ENCODE measurements at regions of chr3 and their contacts with region 1.

Region 1: GRCh38 chr3:137963473-137963872 is 46.5 kb upstream of the CLDN18 start:
- DNase-seq: no peak
- ATAC-seq: no peak
- H3K4me3 ChIP-seq: no peak overlapping the region
- H3K4me3 Mint-ChIP-seq: no peak overlapping the region
- H3K27ac ChIP-seq: no peak overlapping the region
- H3K27ac Mint-ChIP-seq: no peak overlapping the region
- H3K4me1 ChIP-seq: no peaks in the 10 kb centered on the region
- H3K4me1 Mint-ChIP-seq: no peaks in the 10 kb centered on the region
- H3K27me3 ChIP-seq: peaks cover 0 to 2% of the 10 kb centered on the region in 2 experiments
- H3K27me3 Mint-ChIP-seq: peaks cover 2 to 9% of the 10 kb centered on the region in 2 donors

Region 2: GRCh38 chr3:136869282-136869681 is 1094.2 kb before region 1 on chr3:
- CTCF ChIA-PET with region 1: no interaction called
- POLR2A ChIA-PET with region 1: no interaction called
- DNase-seq: no peak
- ATAC-seq: no peak
- H3K4me3 ChIP-seq: no peak overlapping the region
- H3K4me3 Mint-ChIP-seq: no peak overlapping the region
- H3K27ac ChIP-seq: no peak overlapping the region
- H3K27ac Mint-ChIP-seq: no peak overlapping the region
- H3K4me1 ChIP-seq: peaks cover 2 to 41% of the 10 kb centered on the region in 2 experiments
- H3K4me1 Mint-ChIP-seq: peaks cover 73 to 79% (median 76%) of the 10 kb centered on the region in 3 donors
- H3K27me3 ChIP-seq: no peaks in the 10 kb centered on the region
- H3K27me3 Mint-ChIP-seq: no peaks in the 10 kb centered on the region

Region 3: DNA sequence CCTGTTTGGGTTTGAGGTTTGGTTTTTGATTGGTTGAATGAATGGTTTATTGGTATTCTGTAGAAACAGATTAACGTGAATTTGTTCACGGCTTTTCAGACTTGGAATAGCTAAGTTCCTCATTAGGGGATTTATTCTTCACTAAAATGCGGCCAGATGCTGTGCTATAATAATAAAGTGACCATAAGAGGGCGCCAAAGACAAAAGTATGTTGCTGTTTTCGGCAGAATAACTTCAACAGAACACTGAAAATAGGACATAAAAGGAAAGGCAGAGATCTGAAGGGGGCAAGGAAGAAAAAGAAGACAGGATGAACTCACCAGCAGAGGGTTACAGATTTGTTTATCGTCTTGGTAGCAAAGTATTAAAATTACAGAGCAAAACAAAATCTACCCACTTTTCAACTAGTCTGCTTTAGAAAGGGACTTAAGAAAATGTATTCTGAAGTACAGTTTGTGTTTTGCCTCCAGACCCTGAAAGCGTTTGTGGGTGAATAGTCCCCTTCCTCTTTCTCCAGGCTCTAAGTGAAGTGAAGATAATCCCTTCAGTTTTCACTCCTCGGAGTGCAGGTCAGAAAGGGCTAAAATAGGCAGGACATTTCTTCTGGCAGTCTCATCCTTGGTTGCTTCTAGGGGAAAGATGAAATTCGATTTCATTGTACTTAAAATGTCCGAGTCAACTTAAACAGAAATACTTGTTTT is 858.0 kb before region 1 on chr3:
- CTCF ChIA-PET with region 1: interaction called in 1 of 2 experiments, 11 read pairs
- POLR2A ChIA-PET with region 1: no interaction called
- DNase-seq: peak in 4 of 35 experiments; percentile 2 to 62 (median 11)
- ATAC-seq: peak; percentile 33 to 55 (median 50)
- H3K4me3 ChIP-seq: no peak overlapping the region
- H3K4me3 Mint-ChIP-seq: no peak overlapping the region
- H3K27ac ChIP-seq: no peak overlapping the region
- H3K27ac Mint-ChIP-seq: no peak overlapping the region
- H3K4me1 ChIP-seq: no peaks in the 10 kb centered on the region
- H3K4me1 Mint-ChIP-seq: no peaks in the 10 kb centered on the region
- H3K27me3 ChIP-seq: peaks cover 2 to 3% of the 10 kb centered on the region in 2 experiments
- H3K27me3 Mint-ChIP-seq: peaks cover 13 to 22% of the 10 kb centered on the region in 2 donors

Region 4: GRCh38 chr3:139870000-139870675 is 1906.7 kb after region 1 on chr3:
- CTCF ChIA-PET with region 1: no interaction called
- POLR2A ChIA-PET with region 1: no interaction called
- DNase-seq: no peak
- ATAC-seq: no peak
- H3K4me3 ChIP-seq: no peak overlapping the region
- H3K4me3 Mint-ChIP-seq: no peak overlapping the region
- H3K27ac ChIP-seq: no peak overlapping the region
- H3K27ac Mint-ChIP-seq: no peak overlapping the region
- H3K4me1 ChIP-seq: no peaks in the 10 kb centered on the region
- H3K4me1 Mint-ChIP-seq: no peaks in the 10 kb centered on the region
- H3K27me3 ChIP-seq: no peaks in the 10 kb centered on the region
- H3K27me3 Mint-ChIP-seq: peaks cover 0 to 4% of the 10 kb centered on the region in 2 donors